OCI-LY7 (cell line): ENCODE measurements at regions of chr4 and their contacts with region 1.

Region 1: DNA sequence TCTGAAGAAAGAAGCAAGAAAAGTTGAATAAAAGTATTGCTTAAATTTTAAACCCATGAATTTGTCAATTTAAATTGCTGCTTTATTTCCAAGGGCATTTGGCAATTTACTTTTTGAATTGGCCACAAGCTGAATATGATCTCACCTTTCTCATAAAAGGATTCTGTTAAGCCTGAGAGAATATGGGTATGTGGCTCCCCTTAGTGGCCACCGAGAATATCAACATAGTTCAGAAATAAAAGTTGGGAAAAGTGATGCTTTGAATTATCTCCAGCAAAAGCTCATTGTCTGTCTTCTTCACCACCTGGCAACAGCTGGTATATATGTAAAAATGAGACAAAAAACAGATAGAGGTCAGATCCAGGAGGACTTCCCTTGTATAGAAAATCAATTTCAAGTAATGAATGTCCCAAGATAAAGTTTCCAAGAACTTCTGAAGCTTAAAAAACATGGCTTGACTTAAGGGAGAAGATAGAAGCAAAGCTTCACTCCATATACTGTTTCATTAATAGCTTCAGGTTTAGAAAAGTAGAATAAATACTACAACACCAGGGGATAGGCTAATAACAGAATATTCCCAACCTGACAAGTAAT is 290.7 kb upstream of the FAM241A start:
- DNase-seq: peak; percentile 18
- H3K4me3 ChIP-seq: no peak overlapping the region
- H3K27ac ChIP-seq: no peak overlapping the region
- H3K4me1 ChIP-seq: no peaks in the 10 kb centered on the region
- CTCF ChIP-seq: peak; percentile 90

Region 2: GRCh38 chr4:111641955-111642579 is 212.5 kb before region 1 on chr4:
- CTCF ChIA-PET with region 1: no interaction called
- POLR2A ChIA-PET with region 1: no interaction called
- intact Hi-C with region 1: loop called (anchors 5 kb)
- DNase-seq: peak; percentile 81
- H3K4me3 ChIP-seq: no peak overlapping the region
- H3K27ac ChIP-seq: no peak overlapping the region
- H3K4me1 ChIP-seq: no peaks in the 10 kb centered on the region
- CTCF ChIP-seq: peak; percentile 98